ENCODE measurements at regions of chr17 and their contacts with region 1.

Region 1: GRCh38 chr17:44749076-44749979 is 9.5 kb upstream of the ADAM11 start:
- DNase-seq: no peak
- H3K4me3 ChIP-seq: peak overlapping the region in 2 of 3 donors; percentile 30 to 58
- H3K27ac ChIP-seq: peak overlapping the region in 1 of 2 donors; percentile 72
- H3K4me1 ChIP-seq: no peaks in the 10 kb centered on the region
- H3K27me3 ChIP-seq: no peaks in the 10 kb centered on the region
- CTCF ChIP-seq: no peak
- POLR2A ChIP-seq: no peak

Region 2: GRCh38 chr17:44767493-44767892 is 18.2 kb after region 1 on chr17:
- intact Hi-C with region 1: loop called (anchors 1 kb)
- DNase-seq: no peak
- H3K4me3 ChIP-seq: no peak overlapping the region
- H3K27ac ChIP-seq: no peak overlapping the region
- H3K4me1 ChIP-seq: no peaks in the 10 kb centered on the region
- H3K27me3 ChIP-seq: peaks cover 0 to 6% of the 10 kb centered on the region in 2 donors
- CTCF ChIP-seq: no peak
- POLR2A ChIP-seq: no peak

Region 3: GRCh38 chr17:45380991-45381390 is 631.7 kb after region 1 on chr17:
- intact Hi-C with region 1: no loop called
- DNase-seq: no peak
- H3K4me3 ChIP-seq: no peak overlapping the region
- H3K27ac ChIP-seq: no peak overlapping the region
- H3K4me1 ChIP-seq: peaks cover 0 to 14% of the 10 kb centered on the region in 2 donors
- H3K27me3 ChIP-seq: no peaks in the 10 kb centered on the region
- CTCF ChIP-seq: no peak
- POLR2A ChIP-seq: no peak

Measured in breast epithelium (tissue), 4 donors.